ENCODE measurements at regions of chr1 and their contacts with region 1.

Region 1: GRCh38 chr1:101288491-101288944 is 51.7 kb downstream of the S1PR1 start:
- DNase-seq: peak; percentile 75

Region 2: DNA sequence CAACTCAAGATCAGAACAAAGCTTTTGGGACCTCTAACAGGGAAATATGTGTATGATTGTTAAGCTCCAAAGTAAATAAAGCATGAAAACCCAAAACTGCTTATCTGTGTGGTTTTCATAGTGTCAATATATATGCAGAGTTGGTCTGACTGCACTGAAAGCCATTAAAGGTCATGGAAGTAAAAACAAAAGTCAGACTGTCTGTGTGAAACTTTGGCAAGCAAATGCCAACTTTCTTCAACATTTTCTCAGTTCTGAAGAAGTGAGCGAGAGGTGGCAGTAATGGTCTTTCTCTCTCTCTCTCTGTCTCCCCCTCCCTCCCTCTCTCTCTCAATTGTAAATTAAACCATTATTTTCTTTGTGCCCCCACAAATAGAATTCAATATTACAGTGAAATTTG is 151.8 kb before region 1 on chr1:
- CTCF ChIA-PET with region 1: interaction called, 16 read pairs
- POLR2A ChIA-PET with region 1: no interaction called
- DNase-seq: no peak

Region 3: DNA sequence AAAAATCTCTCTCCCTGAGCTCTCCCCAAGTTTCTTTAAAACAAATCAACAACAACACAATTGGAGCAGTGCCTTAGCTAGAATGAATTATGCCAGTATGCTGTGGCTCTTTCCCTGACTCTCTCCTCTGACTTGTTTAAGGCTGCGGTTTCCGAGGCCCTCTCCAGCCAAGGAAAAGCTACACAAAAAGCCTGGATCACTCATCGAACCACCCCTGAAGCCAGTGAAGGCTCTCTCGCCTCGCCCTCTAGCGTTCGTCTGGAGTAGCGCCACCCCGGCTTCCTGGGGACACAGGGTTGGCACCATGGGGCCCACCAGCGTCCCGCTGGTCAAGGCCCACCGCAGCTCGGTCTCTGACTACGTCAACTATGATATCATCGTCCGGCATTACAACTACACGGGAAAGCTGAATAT is 49.8 kb before region 1 on chr1:
- CTCF ChIA-PET with region 1: interaction called, 16 read pairs
- POLR2A ChIA-PET with region 1: interaction called, 4 read pairs
- DNase-seq: peak; percentile 87

Region 4: GRCh38 chr1:101463195-101463594 is 174.7 kb after region 1 on chr1:
- CTCF ChIA-PET with region 1: no interaction called
- POLR2A ChIA-PET with region 1: no interaction called
- DNase-seq: no peak